Activated CD4-positive, alpha-beta T cell treated with anti-CD3 and anti-CD28 coated beads for 36 hours (primary cell): ENCODE measurements at regions of chr19 and their contacts with region 1.

Region 1: DNA sequence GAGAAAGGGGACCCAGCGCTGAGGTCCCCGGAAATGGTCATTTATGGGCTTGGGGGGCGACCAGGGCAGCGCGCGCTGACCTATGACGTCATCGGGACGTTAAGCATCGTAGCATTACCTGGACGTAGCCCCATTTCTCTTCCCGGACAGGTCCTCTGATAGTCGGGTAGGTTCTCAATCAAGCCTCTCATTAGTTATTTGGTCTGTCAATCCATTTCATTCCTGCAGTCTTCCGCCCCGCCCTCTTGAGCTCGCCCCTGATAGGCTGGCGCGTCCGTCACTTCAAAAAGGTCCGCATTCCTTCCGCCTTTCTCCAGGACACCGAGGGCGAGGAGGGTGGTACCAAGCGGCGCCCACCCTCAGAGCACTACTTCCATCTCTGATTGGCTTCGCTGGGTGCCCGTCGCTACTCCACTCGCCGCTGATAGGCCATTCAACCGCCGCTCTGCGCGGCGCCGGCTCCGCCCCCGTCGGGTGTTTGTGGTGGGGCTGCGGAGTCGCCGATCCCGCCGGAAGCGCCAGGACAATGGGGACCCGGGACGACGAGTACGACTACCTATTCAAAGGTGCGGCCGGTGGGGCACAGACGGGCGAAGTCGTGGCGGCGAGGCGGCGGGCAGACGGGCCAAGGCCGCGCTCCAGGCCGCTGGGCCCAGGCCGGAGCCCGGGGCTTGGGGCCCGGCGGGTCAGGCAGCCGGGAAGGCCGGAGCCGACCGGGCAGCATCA is at the start of gene RAB11B:
- DNase-seq: peak; percentile 99
- ATAC-seq: peak; percentile 94
- H3K4me3 Mint-ChIP-seq: peak within 1 kb of the TSS; percentile 92
- H3K27ac Mint-ChIP-seq: peak within 1 kb of the TSS; percentile 97
- H3K4me1 Mint-ChIP-seq: peaks cover 23% of the 10 kb centered on the region
- H3K27me3 Mint-ChIP-seq: no peaks in the 10 kb centered on the region
- total RNA-seq, gene RAB11B: 74.3 to 93.4 TPM

Region 2: GRCh38 chr19:7868676-7869452 is 521.2 kb before region 1 on chr19:
- CTCF ChIA-PET with region 1: no interaction called
- POLR2A ChIA-PET with region 1: interaction called, 3 read pairs
- intact Hi-C with region 1: loop called in 1 of 2 experiments (anchors 1 kb)
- DNase-seq: peak; percentile 92
- ATAC-seq: peak; percentile 75
- H3K4me3 Mint-ChIP-seq: peak overlapping the region; percentile 70
- H3K27ac Mint-ChIP-seq: peak overlapping the region; percentile 51
- H3K4me1 Mint-ChIP-seq: peaks cover 47% of the 10 kb centered on the region
- H3K27me3 Mint-ChIP-seq: peaks cover 29% of the 10 kb centered on the region

Region 3: DNA sequence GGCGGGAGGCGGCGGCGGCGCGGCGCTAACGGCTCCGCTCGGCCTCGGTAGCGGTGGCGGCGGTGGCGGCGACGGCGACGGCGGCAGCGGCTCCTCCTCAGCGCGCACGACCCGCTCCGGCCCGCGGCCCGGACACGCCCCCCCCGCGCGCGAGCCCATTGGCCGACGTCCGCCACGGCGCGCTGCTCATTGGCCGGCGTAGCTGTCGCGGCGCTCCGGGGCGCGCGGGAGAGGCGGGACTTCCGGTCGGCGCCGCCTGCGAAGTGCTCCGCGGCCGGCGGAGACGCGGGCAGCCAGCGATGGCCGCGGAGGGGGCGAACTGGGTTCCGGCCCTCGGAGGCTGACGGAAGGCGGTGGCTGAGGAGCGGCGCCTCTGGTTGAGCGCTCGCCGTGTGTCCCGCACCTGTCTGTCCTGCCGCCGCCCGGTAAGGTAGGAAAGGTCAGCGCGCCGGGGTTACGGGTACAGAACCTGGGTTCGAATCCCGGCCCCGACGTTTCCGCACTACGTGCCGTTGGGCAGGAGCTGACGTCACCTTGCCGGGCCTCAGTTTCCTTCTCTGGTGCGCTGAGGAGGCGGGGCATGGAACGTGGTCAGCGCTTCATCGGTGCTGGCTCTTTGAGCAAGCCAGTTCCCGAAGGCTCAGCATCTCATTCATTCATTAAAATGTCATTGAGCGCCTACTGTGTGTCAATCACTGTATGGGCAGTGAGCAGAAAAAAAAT is 384.4 kb before region 1 on chr19 and contains the start of gene ELAVL1:
- CTCF ChIA-PET with region 1: no interaction called
- POLR2A ChIA-PET with region 1: no interaction called
- intact Hi-C with region 1: loop called in 1 of 2 experiments (anchors 2 kb)
- DNase-seq: peak; percentile 95
- ATAC-seq: peak; percentile 93
- H3K4me3 Mint-ChIP-seq: peak within 1 kb of the TSS; percentile 95
- H3K27ac Mint-ChIP-seq: peak within 1 kb of the TSS; percentile 94
- H3K4me1 Mint-ChIP-seq: peaks cover 36% of the 10 kb centered on the region
- H3K27me3 Mint-ChIP-seq: no peaks in the 10 kb centered on the region
- total RNA-seq, gene ELAVL1: 149 to 184 TPM

Region 4: GRCh38 chr19:8321060-8321985 is 68.7 kb before region 1 on chr19 and contains the starts of genes NDUFA7 and RPS28:
- CTCF ChIA-PET with region 1: no interaction called
- POLR2A ChIA-PET with region 1: no interaction called
- intact Hi-C with region 1: loop called (anchors 1 kb)
- DNase-seq: peak; percentile 99
- ATAC-seq: peak; percentile 94
- H3K4me3 Mint-ChIP-seq: peak within 1 kb of the TSS; percentile 97
- H3K27ac Mint-ChIP-seq: peak within 1 kb of the TSS; percentile 97
- H3K4me1 Mint-ChIP-seq: peaks cover 22% of the 10 kb centered on the region
- H3K27me3 Mint-ChIP-seq: no peaks in the 10 kb centered on the region
- total RNA-seq, gene NDUFA7: 90.9 to 112 TPM
- total RNA-seq, gene RPS28: 1,994 to 2,316 TPM

Region 5: DNA sequence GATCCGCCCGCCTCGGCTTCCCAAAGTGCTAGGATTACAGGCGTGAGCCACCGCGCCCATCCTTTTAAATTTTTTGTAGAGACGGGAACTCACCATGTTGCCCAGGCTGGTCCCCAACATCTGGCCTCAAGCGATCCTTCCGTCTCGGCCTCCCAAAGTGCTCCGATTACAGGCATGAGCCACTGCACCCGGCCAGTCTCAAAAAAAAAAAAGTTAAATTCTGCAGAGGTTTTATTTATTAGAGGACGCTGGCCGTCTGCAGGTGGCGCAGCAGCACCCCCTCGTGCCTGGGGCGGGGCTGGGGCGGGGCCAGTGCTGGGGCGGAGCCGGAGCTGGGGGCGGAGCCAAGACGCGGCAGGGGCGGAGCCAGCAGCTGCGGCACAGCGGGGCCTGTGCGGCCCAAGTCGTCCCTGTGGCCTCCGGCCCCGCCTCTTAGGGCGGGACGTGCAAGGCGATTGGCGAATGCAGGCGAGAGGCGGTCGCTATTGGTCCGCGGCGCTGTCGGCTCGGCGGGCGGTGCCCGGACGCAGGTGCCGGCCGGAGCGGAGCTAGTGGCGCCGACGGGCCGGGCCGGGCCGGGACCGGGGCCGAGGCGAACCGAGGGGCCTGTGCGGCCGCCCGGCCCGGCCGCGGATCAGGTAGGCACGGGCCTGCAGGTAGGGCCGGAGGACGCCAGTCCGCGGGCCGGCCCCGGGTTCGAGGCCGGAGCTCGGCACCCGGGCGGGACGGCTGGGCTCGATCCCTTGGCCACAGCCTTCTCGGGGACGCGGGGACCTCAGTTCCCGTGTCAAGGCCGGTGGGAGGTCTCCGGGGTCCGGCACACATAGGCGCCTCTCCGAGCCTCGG is 23.0 kb after region 1 on chr19 and contains the start of gene MARCHF2:
- CTCF ChIA-PET with region 1: interaction called, 18 read pairs
- POLR2A ChIA-PET with region 1: interaction called, 5 read pairs
- intact Hi-C with region 1: loop called (anchors 1 kb)
- DNase-seq: peak; percentile 97
- ATAC-seq: peak; percentile 100
- H3K4me3 Mint-ChIP-seq: peak within 1 kb of the TSS; percentile 50
- H3K27ac Mint-ChIP-seq: no peak within 1 kb of the TSS
- H3K4me1 Mint-ChIP-seq: peaks cover 5% of the 10 kb centered on the region
- H3K27me3 Mint-ChIP-seq: no peaks in the 10 kb centered on the region
- total RNA-seq, gene MARCHF2: 9.1 to 10.1 TPM